ENCODE measurements at regions of chr5 and their contacts with region 1.

Region 1: GRCh38 chr5:79990598-79991507 is at the start of gene MTX3:
- DNase-seq: peak; percentile 93
- H3K4me3 ChIP-seq: peak within 1 kb of the TSS; percentile 80
- H3K27ac ChIP-seq: peak within 1 kb of the TSS; percentile 85
- H3K4me1 ChIP-seq: peaks cover 41% of the 10 kb centered on the region
- CTCF ChIP-seq: no peak; the same call in 1 of the 2 replicates
- total RNA-seq, gene MTX3: 19.2 and 26.0 TPM in 2 replicates

Region 2: GRCh38 chr5:79924936-79925893 is 65.6 kb before region 1 on chr5:
- CTCF ChIA-PET with region 1: no interaction called
- POLR2A ChIA-PET with region 1: interaction called, 4 read pairs
- intact Hi-C with region 1: loop called (anchors 5 kb)
- DNase-seq: peak; percentile 54
- H3K4me3 ChIP-seq: no peak overlapping the region
- H3K27ac ChIP-seq: no peak overlapping the region
- H3K4me1 ChIP-seq: no peaks in the 10 kb centered on the region
- CTCF ChIP-seq: peak; percentile 74